OCI-LY7 (cell line): ENCODE measurements at regions of chr6 and their contacts with region 1.

Region 1: DNA sequence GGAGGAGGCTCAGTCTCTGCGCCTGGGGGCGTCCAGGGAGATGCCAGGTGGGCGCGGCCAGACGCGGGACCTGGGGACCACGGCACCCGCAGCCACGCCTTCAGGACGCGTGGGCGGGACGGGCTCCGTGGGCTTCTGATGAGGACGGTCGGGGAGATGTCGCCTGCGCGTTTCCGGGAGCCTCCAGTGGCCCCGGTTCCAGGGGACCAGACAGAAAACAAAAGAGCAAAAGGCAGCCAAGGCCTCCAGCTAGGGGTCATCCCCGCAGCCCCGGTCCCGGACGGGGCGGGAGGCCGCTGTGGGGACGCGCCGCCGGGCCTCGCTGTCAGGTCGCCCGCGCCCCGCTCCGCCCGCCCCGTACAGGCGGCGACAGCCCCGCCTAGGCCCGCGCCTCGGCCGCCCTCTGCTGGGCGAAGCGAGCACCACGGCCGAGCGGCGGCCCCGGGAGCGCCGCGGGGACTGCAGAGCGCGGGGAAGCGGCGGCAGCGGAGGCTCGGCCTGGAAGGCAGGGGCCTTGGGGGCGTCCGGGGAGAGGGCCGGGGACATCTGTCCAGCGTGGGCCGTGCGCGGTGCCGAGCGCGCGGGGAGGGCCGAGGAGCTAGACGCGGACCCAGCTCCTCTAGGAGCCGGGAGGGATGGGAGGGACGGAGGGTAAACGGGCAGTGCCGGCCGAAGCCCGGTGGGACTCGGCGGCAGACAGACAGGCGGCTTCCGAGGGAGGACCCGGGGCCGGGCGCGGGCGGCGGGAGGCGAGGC is 48.7 kb downstream of the TMEM242 start:
- DNase-seq: peak; percentile 86
- H3K4me3 ChIP-seq: peak overlapping the region; percentile 67
- H3K27ac ChIP-seq: peak overlapping the region; percentile 34
- H3K4me1 ChIP-seq: peaks cover 23% of the 10 kb centered on the region
- CTCF ChIP-seq: peak; percentile 70

Region 2: DNA sequence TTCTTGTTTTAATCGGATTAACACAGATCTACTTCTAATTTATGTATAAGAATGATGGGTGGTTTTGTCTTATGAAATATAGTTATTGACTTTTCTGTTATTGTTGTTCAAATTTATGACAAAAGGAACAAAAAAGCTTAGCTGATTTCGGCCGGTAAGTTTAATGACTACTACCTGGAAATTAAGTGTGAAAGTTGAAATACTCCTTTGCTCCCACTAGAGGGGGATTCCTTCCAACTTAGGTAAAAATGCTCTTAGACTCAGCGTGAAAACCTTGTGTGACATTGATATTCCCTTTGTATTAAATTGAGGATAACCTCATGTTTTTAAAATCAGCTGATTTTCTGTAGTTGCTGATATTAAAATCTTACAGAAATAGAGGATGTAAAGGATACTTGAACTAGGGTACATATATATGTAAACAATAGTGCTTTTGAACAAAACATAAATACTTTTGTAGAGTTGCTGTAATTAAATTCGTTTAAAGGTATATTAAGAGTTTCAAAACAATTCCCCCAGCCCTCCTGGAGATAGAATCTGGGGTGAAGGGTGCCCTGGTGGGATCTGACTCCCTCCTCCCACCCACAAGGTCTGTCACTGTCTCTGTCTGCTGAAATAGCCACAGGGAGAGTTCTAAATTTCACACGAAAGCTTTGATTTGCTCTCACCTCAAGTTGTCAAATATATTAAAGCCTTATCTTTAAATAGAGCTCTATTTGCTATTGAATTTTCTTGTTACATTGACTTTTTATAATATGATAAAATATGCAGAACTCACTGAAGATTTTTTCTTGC is 240.0 kb before region 1 on chr6:
- CTCF ChIA-PET with region 1: no interaction called
- POLR2A ChIA-PET with region 1: no interaction called
- intact Hi-C with region 1: loop called (anchors 1 kb)
- DNase-seq: peak; percentile 68
- H3K4me3 ChIP-seq: no peak overlapping the region
- H3K27ac ChIP-seq: no peak overlapping the region
- H3K4me1 ChIP-seq: peaks cover 27% of the 10 kb centered on the region
- CTCF ChIP-seq: peak; percentile 92

Region 3: DNA sequence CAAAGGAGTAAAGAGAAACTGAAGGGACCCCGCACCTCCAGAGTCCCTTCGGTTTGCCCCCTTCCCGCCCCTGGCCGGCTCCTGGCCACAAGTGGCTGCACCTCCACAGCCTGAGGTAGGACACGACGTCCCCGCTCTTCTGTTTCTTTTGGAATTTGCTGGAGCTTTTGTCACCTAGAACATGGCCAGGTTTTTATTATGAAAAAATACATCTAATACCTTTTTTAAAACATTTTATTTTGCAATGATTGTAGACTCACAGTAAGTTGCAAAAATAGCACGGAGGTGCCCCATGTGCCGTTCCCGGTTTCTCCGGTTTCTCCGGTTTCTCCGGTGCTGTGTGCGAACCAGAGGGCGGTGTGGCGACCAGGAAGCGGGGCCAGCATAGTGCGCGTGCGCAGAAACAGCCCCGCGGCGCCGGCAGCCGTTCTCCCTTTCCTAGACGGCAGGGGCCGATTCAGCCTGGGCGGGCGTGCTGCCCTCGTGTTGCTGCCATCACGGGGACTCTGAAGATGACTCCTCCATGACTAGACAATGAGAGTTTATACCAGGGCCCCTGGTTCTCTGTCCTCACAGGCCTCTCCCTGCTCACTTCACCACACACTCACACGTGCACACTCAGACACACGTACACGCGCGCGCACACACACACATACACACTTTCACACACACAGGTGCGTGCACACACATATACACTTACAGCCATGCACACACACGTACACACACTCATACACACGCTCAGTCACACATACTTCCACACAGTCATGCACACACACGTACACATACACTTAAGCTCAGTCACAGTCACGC is 53.4 kb before region 1 on chr6:
- CTCF ChIA-PET with region 1: no interaction called
- POLR2A ChIA-PET with region 1: interaction called, 3 read pairs
- intact Hi-C with region 1: loop called (anchors 2 kb)
- DNase-seq: peak; percentile 72
- H3K4me3 ChIP-seq: peak overlapping the region; percentile 63
- H3K27ac ChIP-seq: no peak overlapping the region
- H3K4me1 ChIP-seq: peaks cover 25% of the 10 kb centered on the region
- CTCF ChIP-seq: 0 out of 2 replicates have a peak, but pooled peaks have one; percentile 17

Region 4: GRCh38 chr6:157227202-157228166 is 47.2 kb before region 1 on chr6:
- CTCF ChIA-PET with region 1: no interaction called
- POLR2A ChIA-PET with region 1: interaction called, 3 read pairs
- intact Hi-C with region 1: loop called (anchors 1 kb)
- DNase-seq: peak; percentile 27
- H3K4me3 ChIP-seq: no peak overlapping the region
- H3K27ac ChIP-seq: no peak overlapping the region
- H3K4me1 ChIP-seq: peaks cover 35% of the 10 kb centered on the region
- CTCF ChIP-seq: peak; percentile 67

Region 5: DNA sequence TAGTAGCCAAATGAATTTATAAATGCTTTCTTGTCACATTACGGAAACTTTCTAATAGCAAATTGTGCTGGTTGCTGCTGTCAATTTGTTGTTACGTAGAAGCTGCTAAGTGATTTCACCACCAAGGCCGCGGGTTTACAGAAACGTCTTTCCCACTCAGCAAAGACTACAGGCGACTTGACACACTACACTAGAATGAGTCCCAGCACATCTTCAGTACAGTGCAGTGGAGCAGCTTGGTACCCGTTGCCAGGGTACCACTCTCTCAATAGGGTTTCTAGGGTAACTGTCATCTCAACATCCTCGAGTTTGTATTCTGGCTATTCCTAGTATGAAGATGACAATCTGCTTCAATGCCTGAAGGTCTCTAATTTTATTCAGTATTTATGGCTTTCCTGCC is 83.6 kb after region 1 on chr6:
- CTCF ChIA-PET with region 1: no interaction called
- POLR2A ChIA-PET with region 1: no interaction called
- intact Hi-C with region 1: no loop called
- DNase-seq: no peak
- H3K4me3 ChIP-seq: no peak overlapping the region
- H3K27ac ChIP-seq: no peak overlapping the region
- H3K4me1 ChIP-seq: no peaks in the 10 kb centered on the region
- CTCF ChIP-seq: no peak